ENCODE measurements at regions of chr10 and their contacts with region 1.

Region 1: GRCh38 chr10:92734301-92734700 is 44.5 kb downstream of the HHEX start:
- DNase-seq: no peak
- ATAC-seq: no peak
- H3K4me3 ChIP-seq: no peak overlapping the region
- H3K27ac ChIP-seq: no peak overlapping the region
- H3K4me1 ChIP-seq: no peaks in the 10 kb centered on the region
- H3K27me3 ChIP-seq: no peaks in the 10 kb centered on the region; the same call in 1 of the 2 replicates
- CTCF ChIP-seq: no peak
- POLR2A ChIP-seq: no peak
- RAD21 ChIP-seq: no peak

Region 2: GRCh38 chr10:92773776-92774175 is 39.5 kb after region 1 on chr10:
- CTCF ChIA-PET with region 1: no interaction called
- POLR2A ChIA-PET with region 1: interaction called, 12 read pairs
- dilution Hi-C with region 1: no loop called
- in situ Hi-C with region 1: no loop called
- intact Hi-C with region 1: no loop called
- DNase-seq: no peak
- ATAC-seq: no peak
- H3K4me3 ChIP-seq: no peak overlapping the region
- H3K27ac ChIP-seq: no peak overlapping the region
- H3K4me1 ChIP-seq: no peaks in the 10 kb centered on the region; the same call in 1 of the 2 replicates
- H3K27me3 ChIP-seq: no peaks in the 10 kb centered on the region
- CTCF ChIP-seq: no peak
- POLR2A ChIP-seq: no peak
- RAD21 ChIP-seq: no peak